Right ventricle myocardium superior (tissue), 1 donor: ENCODE measurements at regions of chr11 and their contacts with region 1.

Region 1: GRCh38 chr11:86421946-86422345 is 47.3 kb downstream of the CCDC81 start:
- DNase-seq: no peak
- ATAC-seq: no peak

Region 2: DNA sequence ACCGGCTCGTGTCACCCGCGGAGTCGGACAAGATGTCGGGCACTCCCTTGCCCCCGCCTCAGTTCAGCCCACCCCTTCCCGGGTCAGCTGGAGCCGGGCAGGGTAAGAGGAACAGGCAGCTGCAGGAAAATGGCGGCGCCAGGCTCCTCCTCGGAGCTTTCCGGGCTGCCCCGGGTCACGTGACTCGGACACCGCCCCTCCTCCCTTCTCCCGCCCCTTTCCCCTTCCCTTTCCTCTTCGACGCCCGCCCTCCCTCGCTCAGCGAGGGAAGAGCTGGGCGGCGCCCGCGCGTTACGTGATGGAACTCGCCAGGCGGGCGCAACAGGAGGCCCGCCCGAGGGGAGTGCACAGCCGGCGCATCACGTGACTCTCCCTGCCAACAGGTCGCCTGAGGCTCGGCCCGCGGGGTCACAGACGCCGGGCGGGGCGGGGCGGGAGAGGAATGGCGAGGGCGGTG is 353.0 kb before region 1 on chr11 and contains the start of gene PICALM:
- intact Hi-C with region 1: no loop called
- DNase-seq: peak; percentile 99
- ATAC-seq: peak; percentile 96
- total RNA-seq, gene PICALM: 119 TPM

Region 3: DNA sequence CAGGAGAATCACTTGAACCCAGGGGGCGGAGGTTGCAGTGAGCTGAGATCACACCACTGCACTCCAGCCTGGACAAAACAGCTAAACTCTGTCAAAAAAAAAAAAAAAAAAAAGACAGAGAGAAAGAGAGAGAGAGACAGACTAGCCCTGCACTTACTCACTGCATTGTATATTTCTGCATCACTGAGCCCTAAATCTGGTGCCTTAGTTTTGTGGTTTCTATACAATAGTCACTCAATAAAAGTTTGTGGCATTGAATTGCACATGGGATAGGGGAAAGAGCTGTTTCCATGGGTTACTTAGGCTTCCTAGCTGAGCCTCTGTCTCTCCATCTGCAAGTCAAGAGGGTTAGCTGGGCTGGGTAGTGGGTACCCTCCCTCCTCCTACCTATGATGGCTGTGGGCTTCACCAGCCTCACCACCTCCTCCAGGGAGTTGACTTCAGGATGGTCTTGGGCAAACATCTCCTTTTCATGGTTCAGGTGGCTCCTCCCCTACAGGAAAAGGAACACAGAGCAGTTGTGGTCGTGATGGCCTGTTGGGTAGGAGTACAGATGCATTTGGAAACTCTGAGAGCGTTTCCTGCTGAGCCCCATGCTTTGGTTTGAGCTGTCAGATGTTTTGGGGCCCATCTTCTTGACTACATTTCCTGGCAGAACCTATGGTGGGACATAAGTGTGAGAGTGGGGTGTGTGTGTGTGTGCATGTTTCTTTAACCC is 26.0 kb after region 1 on chr11:
- intact Hi-C with region 1: loop called (anchors 2 kb)
- DNase-seq: no peak
- ATAC-seq: no peak